Tibial artery (tissue), 4 donors: ENCODE measurements at regions of chr11 and their contacts with region 1.

Region 1: GRCh38 chr11:78149646-78150045 is 10.2 kb upstream of the ALG8 start:
- DNase-seq: peak in 1 of 2 donors; percentile 65
- H3K4me3 ChIP-seq: no peak overlapping the region
- H3K27ac ChIP-seq: peak overlapping the region in 1 of 2 donors; percentile 51
- H3K4me1 ChIP-seq: peaks cover 0 to 16% (median 3%) of the 10 kb centered on the region in 4 donors
- H3K27me3 ChIP-seq: no peaks in the 10 kb centered on the region
- CTCF ChIP-seq: peak; percentile 56 to 57

Region 2: GRCh38 chr11:78212586-78213371 is 63.1 kb after region 1 on chr11:
- intact Hi-C with region 1: loop called (anchors 2 kb)
- DNase-seq: peak in 1 of 2 donors; percentile 74
- H3K4me3 ChIP-seq: no peak overlapping the region
- H3K27ac ChIP-seq: peak overlapping the region; percentile 36 to 56
- H3K4me1 ChIP-seq: peaks cover 0 to 31% (median 7%) of the 10 kb centered on the region in 4 donors
- H3K27me3 ChIP-seq: no peaks in the 10 kb centered on the region
- CTCF ChIP-seq: no peak

Region 3: GRCh38 chr11:78228467-78228866 is 78.8 kb after region 1 on chr11:
- intact Hi-C with region 1: no loop called
- DNase-seq: no peak
- H3K4me3 ChIP-seq: no peak overlapping the region
- H3K27ac ChIP-seq: peak overlapping the region in 1 of 2 donors; percentile 17
- H3K4me1 ChIP-seq: peaks cover 0 to 40% (median 16%) of the 10 kb centered on the region in 4 donors
- H3K27me3 ChIP-seq: no peaks in the 10 kb centered on the region
- CTCF ChIP-seq: peak; percentile 40 to 59

Region 4: DNA sequence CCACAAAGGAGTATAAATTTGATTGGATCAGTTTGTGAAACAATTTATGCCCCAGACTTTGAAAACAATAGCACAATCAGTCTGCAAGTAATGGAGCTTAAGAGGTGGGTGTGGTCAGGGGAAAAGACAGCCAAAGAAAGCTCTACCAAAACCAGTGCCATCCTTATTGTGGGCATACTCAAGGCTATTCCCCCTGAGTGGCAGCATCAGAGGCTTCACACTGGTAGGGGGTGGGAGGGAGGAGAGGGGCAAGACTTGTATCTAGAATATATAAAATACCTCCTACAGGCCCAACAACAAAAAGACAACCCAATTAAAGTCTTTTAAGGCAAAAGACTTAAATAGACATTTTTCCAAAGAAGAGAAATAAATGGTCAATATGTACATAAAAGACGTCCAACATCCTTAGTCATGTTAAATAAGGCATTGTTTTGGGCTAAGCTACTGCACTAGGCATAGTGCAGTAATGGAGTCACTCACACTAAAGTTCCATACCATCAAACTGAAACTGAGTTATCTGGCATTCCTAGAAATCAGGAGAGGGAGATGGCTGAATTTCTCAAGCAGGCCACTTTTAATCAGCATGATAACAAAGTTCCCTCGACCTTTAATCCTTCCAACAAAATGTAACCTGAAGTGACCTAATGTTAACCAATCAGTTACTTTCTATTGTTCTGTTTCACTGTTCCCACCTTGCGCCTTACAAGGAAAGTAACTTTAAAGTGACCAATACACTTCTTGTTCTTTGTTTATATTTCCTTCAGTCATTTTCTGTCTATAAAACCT is 400.2 kb after region 1 on chr11:
- intact Hi-C with region 1: loop called (anchors 5 kb)
- DNase-seq: no peak
- H3K4me3 ChIP-seq: no peak overlapping the region
- H3K27ac ChIP-seq: no peak overlapping the region
- H3K4me1 ChIP-seq: no peaks in the 10 kb centered on the region
- H3K27me3 ChIP-seq: no peaks in the 10 kb centered on the region
- CTCF ChIP-seq: no peak

Region 5: DNA sequence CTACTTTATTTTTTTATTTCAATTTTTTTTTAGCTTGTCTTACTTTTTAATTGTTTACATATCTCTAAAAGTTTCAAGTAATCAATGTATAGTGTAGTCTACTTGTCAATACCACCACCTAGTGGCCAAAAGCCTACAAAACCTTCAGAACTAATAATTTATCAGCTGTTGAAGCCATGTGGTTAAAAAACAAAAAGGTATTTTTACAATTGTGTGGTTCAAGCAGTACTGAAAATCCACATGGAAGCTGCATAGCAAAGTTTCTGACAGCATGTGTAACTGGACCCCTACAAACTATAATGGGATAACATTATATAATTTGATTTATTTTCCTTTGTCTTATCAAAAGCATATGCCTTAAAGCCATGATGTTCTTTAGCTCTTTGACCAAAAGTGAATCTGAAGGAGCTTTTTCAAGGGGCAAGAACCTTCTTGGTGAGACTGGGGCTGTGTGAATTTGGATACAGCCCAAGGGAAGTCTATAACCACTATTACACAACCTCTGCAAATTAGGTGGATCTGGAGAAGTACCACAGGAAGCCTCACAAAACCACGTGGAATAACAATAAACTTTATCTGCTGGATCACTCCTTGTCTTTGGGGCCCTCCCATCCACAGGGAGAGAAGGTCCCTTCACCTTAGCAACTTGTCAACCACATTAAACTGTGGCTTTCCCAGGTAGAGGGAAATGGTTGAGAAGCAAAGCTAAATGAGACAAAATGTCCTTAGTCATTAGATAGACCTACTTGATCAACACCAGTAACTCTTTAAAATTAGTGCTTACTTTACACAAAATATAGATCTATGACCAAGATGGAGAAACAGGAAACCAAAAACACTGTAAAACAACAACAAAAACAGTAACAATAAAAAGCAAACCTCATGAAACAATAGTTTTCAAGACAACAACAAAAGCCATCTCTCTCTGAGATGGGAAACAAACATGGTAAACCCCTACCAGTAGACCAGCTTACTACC is 415.1 kb after region 1 on chr11:
- intact Hi-C with region 1: loop called (anchors 5 kb)
- DNase-seq: no peak
- H3K4me3 ChIP-seq: no peak overlapping the region
- H3K27ac ChIP-seq: peak overlapping the region in 1 of 2 donors; percentile 8
- H3K4me1 ChIP-seq: peaks cover 0 to 39% (median 15%) of the 10 kb centered on the region in 4 donors
- H3K27me3 ChIP-seq: no peaks in the 10 kb centered on the region
- CTCF ChIP-seq: peak; percentile 73 to 79